Posterior vena cava (tissue), 2 donors: ENCODE measurements at regions of chr10 and their contacts with region 1.

Region 1: GRCh38 chr10:58952747-58953466 is 223.5 kb upstream of the PHYHIPL start:
- DNase-seq: no peak

Region 2: GRCh38 chr10:59036311-59037017 is 83.6 kb after region 1 on chr10:
- intact Hi-C with region 1: no loop called
- DNase-seq: no peak

Region 3: GRCh38 chr10:59177031-59177797 is 224.3 kb after region 1 on chr10:
- intact Hi-C with region 1: loop called in 1 of 2 experiments (anchors 10 kb)
- DNase-seq: peak; percentile 29